ENCODE measurements at regions of chr7 and their contacts with region 1.

Region 1: DNA sequence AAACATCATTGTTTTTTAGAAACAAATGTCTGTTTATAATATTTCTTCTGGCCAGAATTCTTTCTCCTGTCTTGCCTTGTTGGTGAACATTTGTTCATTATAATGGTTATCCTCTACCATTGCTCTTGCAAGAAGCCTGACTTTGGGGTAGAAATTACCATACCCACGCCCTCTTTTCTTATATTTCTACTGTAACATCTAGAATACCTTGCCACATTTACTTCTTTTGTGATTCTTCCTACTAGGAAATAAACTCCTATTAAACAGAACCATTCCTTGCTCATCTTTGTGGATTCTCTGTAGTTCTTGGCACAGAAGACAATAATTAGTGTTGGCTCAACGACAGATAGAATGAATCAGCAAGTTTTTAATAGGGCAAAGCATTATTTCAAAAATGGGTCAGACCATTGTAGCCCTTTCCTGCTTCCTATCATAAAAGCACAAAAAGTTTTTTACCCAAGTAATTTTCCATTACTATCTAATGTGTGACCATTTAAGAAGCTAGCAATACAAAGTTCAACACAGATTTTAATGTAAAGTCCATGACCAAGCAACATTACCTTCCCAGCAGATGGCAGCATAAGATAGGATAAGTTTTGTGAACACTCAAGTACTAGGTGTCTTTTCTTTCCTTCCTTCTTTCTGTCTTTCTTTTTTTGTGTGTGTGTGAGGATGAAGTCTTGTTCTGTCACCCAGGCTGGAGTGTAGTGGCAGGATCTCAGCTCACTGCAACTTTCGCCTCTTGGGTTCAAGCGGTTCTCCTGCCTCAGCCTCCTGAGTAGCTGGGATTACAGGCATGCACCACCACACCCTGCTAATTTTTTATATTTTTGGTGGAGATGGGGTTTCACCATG is 270.4 kb downstream of the HGF start:
- DNase-seq: peak; percentile 47
- H3K4me3 ChIP-seq: no peak overlapping the region
- H3K27ac ChIP-seq: peak overlapping the region; percentile 75 to 84
- H3K4me1 ChIP-seq: peaks cover 8 to 9% of the 10 kb centered on the region in 2 experiments; a peak in 1 of 4 replicates
- H3K27me3 ChIP-seq: no peaks in the 10 kb centered on the region
- CTCF ChIP-seq: peak; percentile 99
- EP300 ChIP-seq: peak in 1 of 2 experiments; percentile 53; a peak in 2 of 4 replicates
- RAD21 ChIP-seq: peak; percentile 95

Region 2: DNA sequence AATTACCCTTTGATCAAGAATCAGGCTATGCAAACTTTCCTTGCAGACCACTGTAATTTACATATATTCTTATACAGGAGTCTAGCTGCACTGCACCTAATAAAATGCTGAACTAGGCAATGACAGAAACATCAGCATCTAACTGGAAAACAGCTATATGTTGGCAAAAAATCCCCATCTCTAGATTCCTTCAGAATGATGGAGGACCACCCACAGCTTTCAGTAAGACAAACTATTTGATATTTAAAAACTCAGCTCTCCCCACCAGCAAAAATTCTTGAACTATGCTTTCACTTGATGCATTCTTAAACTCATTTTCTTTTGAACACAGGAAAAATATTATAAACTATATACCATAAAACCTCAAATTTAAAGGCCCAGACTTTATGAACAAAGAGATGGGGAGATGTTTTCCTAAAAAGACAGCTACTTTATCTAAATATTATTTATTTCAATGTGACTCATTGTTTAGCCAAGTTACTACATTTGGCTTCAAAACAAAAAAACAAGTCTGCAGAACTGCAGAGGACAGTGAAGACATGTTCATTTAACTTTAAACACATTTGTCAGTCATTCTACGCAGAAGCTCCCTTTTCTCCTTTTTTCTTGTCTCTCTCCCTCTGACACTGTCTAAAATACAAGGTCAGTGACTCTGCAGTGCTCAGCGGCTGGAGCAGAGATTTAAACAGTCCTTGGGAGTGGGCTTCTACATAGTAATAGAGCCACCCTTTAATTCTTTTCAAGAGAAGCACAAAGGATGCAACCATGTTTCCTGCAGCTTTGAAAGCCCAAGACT is 657.9 kb before region 1 on chr7:
- CTCF ChIA-PET with region 1: no interaction called
- POLR2A ChIA-PET with region 1: no interaction called
- DNase-seq: no peak
- H3K4me3 ChIP-seq: no peak overlapping the region
- H3K27ac ChIP-seq: peak overlapping the region in 1 of 2 experiments; percentile 95; a peak in 2 of 4 replicates
- H3K4me1 ChIP-seq: peaks cover 13 to 27% of the 10 kb centered on the region in 2 experiments; a peak in 3 of 4 replicates
- H3K27me3 ChIP-seq: no peaks in the 10 kb centered on the region
- CTCF ChIP-seq: no peak
- EP300 ChIP-seq: no peak
- RAD21 ChIP-seq: no peak

Region 3: GRCh38 chr7:81482600-81483186 is 16.8 kb before region 1 on chr7:
- CTCF ChIA-PET with region 1: interaction called, 55 read pairs
- POLR2A ChIA-PET with region 1: no interaction called
- DNase-seq: peak; percentile 35
- H3K4me3 ChIP-seq: no peak overlapping the region
- H3K27ac ChIP-seq: no peak overlapping the region
- H3K4me1 ChIP-seq: peaks cover 0 to 3% of the 10 kb centered on the region in 2 experiments; a peak in 2 of 4 replicates
- H3K27me3 ChIP-seq: no peaks in the 10 kb centered on the region
- CTCF ChIP-seq: peak; percentile 80
- EP300 ChIP-seq: no peak
- RAD21 ChIP-seq: peak; percentile 84

Region 4: DNA sequence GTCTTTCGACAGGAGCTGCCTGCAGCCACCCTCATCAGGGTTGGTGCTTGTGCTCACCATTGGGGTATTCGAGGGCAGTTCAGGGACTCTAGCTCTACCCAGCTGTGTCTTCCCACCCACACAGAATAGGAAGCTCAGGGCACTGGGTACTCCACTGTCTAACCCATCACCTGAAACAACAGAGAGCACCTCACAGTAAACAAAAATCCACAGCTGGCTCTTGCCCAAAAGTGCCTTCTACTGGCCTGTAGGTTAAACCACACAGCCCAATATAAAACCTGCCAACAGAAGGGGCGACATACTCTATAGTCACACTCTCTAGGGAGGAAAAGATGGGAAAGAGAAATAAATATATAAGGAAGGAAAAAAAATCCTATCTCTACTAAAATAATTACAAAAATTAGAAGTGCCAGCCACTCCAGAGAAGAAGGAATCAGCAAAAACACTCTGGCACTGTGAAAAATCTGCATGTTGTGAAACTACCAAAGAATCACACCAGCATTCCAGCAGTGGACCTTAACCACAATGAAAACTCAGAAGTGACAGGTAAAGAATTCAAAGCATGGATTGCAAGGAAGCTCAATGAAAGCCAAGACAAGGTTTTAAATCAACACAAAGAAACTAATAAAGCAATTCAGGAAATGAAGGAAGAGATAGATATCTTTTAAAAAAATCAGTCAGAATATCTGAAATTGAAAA is 160.4 kb after region 1 on chr7:
- CTCF ChIA-PET with region 1: interaction called, 12 read pairs
- POLR2A ChIA-PET with region 1: no interaction called
- DNase-seq: no peak
- H3K4me3 ChIP-seq: no peak overlapping the region
- H3K27ac ChIP-seq: no peak overlapping the region
- H3K4me1 ChIP-seq: peaks cover 0 to 8% of the 10 kb centered on the region in 2 experiments; a peak in 2 of 4 replicates
- H3K27me3 ChIP-seq: no peaks in the 10 kb centered on the region
- CTCF ChIP-seq: no peak
- EP300 ChIP-seq: no peak
- RAD21 ChIP-seq: no peak

Region 5: GRCh38 chr7:81956520-81956919 is 457.0 kb after region 1 on chr7:
- CTCF ChIA-PET with region 1: interaction called, 55 read pairs
- POLR2A ChIA-PET with region 1: no interaction called
- DNase-seq: peak; percentile 42
- H3K4me3 ChIP-seq: no peak overlapping the region; a peak in 1 of 4 replicates
- H3K27ac ChIP-seq: no peak overlapping the region
- H3K4me1 ChIP-seq: no peaks in the 10 kb centered on the region; a peak in 1 of 4 replicates
- H3K27me3 ChIP-seq: no peaks in the 10 kb centered on the region
- CTCF ChIP-seq: peak; percentile 72
- EP300 ChIP-seq: no peak
- RAD21 ChIP-seq: peak; percentile 96

Region 6: DNA sequence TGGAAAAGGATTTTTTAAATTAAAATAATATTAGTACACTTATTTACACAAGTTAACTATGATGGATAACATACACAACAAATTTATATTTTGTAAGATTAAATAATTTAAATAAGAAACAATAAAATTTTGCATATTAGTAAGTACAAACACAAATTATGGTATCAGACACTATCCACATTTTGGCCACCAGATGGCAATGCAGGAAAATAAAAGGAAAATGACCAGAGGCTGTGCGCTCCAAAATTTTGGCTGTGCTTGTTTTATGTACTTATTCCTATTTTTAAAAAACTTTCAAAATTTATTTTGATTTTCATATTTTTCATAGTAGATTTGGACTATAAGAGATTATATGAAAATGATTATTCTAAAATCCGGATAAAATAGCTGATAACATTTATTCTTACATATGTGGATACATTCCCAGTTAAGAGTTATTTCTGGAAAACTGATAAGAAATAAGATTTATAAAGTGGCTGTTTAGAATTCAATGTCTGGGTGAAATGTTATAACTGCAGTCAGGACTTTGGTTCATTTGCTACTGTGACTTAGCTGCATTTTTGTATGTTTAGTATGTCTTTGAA is 545.1 kb after region 1 on chr7:
- CTCF ChIA-PET with region 1: interaction called, 29 read pairs
- POLR2A ChIA-PET with region 1: no interaction called
- DNase-seq: peak; percentile 16
- H3K4me3 ChIP-seq: no peak overlapping the region
- H3K27ac ChIP-seq: no peak overlapping the region
- H3K4me1 ChIP-seq: peaks cover 14 to 29% of the 10 kb centered on the region in 2 experiments; a peak in 3 of 4 replicates
- H3K27me3 ChIP-seq: no peaks in the 10 kb centered on the region
- CTCF ChIP-seq: peak; percentile 89
- EP300 ChIP-seq: 0 out of 4 replicates have a peak, but pooled peaks of 1 of the 2 experiments have one; percentile 16
- RAD21 ChIP-seq: peak; percentile 97

Region 7: DNA sequence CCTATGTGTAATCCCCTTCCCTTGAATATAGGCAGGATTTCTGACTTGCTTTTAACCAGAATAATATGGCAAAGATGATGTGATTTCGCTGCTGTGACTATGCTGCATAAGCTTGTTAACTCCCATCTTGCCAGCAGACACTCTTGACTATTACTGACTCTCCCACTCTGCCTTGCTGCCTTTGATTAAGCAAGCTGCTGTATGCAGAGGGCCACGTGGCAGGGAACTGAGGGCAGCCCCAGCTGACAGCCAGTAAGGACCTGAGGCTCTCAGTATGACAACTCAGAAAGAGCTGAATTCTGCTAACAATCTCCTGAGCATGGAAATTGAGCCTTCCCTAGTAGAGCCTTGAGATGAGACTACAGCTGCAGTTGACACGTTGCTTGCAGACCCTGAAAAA is 1223.5 kb after region 1 on chr7:
- CTCF ChIA-PET with region 1: interaction called, 40 read pairs
- POLR2A ChIA-PET with region 1: no interaction called
- DNase-seq: no peak
- H3K4me3 ChIP-seq: no peak overlapping the region
- H3K27ac ChIP-seq: no peak overlapping the region
- H3K4me1 ChIP-seq: peaks cover 0 to 8% of the 10 kb centered on the region in 2 experiments; a peak in 2 of 4 replicates
- H3K27me3 ChIP-seq: no peaks in the 10 kb centered on the region
- CTCF ChIP-seq: no peak
- EP300 ChIP-seq: no peak
- RAD21 ChIP-seq: no peak